Caco-2 (cell line): ENCODE measurements at regions of chr16 and their contacts with region 1.

Region 1: GRCh38 chr16:85536073-85536410 is 77.1 kb upstream of the GSE1 start:
- DNase-seq: no peak
- H3K4me3 ChIP-seq: no peak overlapping the region
- H3K4me3 Mint-ChIP-seq: peak overlapping the region; percentile 58
- H3K27ac Mint-ChIP-seq: peak overlapping the region; percentile 97
- H3K4me1 ChIP-seq: peaks cover 40% of the 10 kb centered on the region
- H3K4me1 Mint-ChIP-seq: peaks cover 34% of the 10 kb centered on the region
- H3K27me3 ChIP-seq: no peaks in the 10 kb centered on the region
- H3K27me3 Mint-ChIP-seq: no peaks in the 10 kb centered on the region
- CTCF ChIP-seq: no peak

Region 2: GRCh38 chr16:85491058-85491771 is 44.8 kb before region 1 on chr16:
- CTCF ChIA-PET with region 1: no interaction called
- POLR2A ChIA-PET with region 1: no interaction called
- intact Hi-C with region 1: loop called (anchors 1 kb)
- DNase-seq: peak in 1 of 2 experiments; percentile 34
- H3K4me3 ChIP-seq: no peak overlapping the region
- H3K4me3 Mint-ChIP-seq: peak overlapping the region; percentile 62
- H3K27ac Mint-ChIP-seq: peak overlapping the region; percentile 88
- H3K4me1 ChIP-seq: peaks cover 30% of the 10 kb centered on the region
- H3K4me1 Mint-ChIP-seq: peaks cover 34% of the 10 kb centered on the region
- H3K27me3 ChIP-seq: no peaks in the 10 kb centered on the region
- H3K27me3 Mint-ChIP-seq: no peaks in the 10 kb centered on the region
- CTCF ChIP-seq: peak; percentile 40 to 63